Right ventricle myocardium superior (tissue), 1 donor: ENCODE measurements at regions of chr9 and their contacts with region 1.

Region 1: DNA sequence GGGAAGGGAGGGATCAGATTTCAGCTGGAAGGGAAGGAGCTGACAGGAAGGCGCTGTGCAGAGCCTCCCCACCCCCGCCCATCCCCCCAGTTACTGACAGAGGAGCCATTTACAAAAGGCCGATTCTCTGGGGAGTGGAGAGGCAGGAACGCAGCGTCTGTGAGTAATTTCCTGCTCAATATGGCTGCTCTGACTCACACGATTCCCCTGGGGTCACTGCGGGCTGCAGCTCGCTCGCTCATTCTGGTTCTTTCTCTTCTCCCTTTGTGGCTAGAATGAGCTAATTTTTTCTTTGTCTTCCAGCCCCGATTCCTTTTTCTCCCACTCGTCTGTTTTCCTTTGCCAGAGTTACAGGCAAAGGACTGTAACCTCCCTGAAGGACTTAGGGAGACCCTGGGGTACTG is 28.8 kb downstream of the PTPA start:
- DNase-seq: peak; percentile 93
- ATAC-seq: peak; percentile 81

Region 2: DNA sequence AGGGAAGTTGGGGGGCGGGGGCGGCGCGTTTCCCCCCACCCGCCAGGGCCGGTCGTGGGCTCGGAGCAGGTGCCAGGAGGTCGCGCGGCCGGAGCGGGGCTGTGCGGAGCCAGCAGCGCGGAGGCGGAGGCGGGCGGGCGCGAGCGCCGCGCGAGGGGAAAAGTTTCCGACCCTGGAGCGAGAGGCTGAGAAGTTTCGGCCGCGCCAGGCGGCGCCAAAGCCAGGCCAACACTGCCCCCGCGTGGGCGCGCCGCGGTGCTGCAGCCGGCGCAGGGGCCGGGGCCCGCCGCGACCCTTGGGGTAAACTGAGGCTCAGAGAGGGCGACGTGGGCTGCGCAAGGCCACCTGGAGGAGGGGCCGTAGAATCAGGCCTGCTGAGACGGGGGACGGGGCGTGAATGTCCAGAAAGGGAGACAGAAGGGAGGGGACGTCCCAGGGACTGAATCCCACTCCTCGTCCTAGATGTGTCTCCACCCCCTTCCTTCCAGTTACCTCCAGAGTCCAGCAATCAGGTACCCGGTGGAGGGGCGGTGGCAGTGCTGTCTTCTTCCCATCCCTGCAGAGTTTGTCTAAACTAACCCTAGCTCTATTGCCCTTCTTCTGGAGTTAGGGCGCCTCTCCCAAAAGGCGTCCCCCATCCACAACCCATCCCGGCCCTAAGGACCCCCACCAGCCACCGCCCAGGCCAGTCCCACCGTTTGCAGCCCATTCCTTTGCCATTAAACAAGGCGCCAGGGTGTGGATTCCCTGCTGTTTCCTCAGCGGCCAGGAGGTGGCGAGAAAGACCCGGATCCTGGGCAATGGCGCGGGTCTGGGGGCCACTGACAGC is 470.7 kb after region 1 on chr9:
- intact Hi-C with region 1: loop called (anchors 2 kb)
- DNase-seq: peak; percentile 89
- ATAC-seq: peak; percentile 76

Region 3: DNA sequence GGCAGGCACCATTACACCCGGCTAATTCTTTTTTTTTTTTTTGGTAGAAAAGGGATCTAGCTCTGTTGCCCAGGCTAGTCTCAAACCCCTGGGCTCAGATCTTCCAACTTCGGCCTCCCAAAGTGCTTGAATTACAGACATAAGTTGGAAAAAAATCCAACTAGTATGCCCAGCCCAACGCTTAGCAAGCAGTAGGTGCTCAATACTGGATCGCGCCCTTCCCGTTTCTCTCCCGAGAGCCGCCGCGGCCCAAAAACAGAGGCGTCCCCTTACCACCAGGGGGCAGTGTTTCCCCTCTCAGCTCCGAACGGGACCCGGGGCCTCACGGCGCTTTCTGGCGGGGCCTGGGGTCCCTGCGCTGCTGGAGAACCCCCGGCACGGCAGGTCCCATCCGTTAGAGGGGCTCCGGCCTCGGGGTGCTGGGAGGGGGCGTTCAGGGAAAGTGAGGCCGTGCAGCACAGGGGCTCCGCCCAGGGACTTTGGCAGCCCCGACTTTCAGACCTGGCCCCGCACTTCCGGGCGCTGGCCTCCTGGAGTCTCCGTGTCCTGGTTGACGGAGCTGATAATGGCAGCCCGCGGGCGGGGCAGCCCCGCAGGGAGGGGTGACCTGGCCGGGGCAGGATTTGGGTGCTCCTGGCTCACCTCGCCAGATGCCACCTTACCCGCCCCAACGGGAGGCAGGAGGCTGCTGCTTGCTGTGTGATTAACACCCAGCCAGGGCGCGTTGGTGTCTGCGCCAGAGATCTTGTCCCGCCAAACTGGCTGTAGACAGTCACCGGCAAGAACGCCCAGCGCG is 597.7 kb after region 1 on chr9:
- intact Hi-C with region 1: loop called (anchors 5 kb)
- DNase-seq: peak; percentile 90
- ATAC-seq: peak; percentile 98